GM12878 (cell line): ENCODE measurements at regions of chr2 and their contacts with region 1.

Region 1: DNA sequence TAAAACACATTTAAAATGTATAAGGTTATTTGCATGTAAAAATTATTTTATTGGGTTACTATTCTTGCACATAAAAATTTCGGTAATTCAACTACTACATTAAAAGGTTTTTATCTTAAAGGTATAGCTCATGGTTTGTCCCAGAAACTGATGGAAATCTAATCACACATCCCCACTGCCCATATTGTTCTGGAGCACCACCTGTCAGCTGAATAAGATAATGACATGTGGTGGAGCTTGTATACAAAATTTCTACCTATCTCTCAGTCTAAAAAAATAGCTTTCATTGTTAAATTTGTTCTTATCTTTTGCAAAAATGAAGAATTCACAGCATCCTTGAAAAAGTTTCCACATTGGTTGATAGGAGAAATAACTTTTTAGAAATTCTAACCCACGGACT is 18.3 kb downstream of the ERBB4 start:
- DNase-seq: no peak
- ATAC-seq: no peak
- H3K4me3 ChIP-seq: no peak overlapping the region
- H3K27ac ChIP-seq: no peak overlapping the region
- H3K4me1 ChIP-seq: no peaks in the 10 kb centered on the region
- H3K27me3 ChIP-seq: no peaks in the 10 kb centered on the region
- CTCF ChIP-seq: peak; percentile 18 to 54 (median 21); a peak in 2 of 6 replicates
- EP300 ChIP-seq: no peak
- POLR2A ChIP-seq: no peak
- RAD21 ChIP-seq: peak; percentile 59

Region 2: GRCh38 chr2:212147921-212148513 is 372.3 kb before region 1 on chr2:
- CTCF ChIA-PET with region 1: no interaction called
- POLR2A ChIA-PET with region 1: no interaction called
- RAD21 ChIA-PET with region 1: no interaction called
- SMC1A ChIA-PET with region 1: no interaction called
- in situ Hi-C with region 1: no loop called
- intact Hi-C with region 1: loop called (anchors 2 kb)
- DNase-seq: no peak
- ATAC-seq: no peak
- H3K4me3 ChIP-seq: no peak overlapping the region
- H3K27ac ChIP-seq: no peak overlapping the region
- H3K4me1 ChIP-seq: no peaks in the 10 kb centered on the region
- H3K27me3 ChIP-seq: no peaks in the 10 kb centered on the region; a peak in 1 of 4 replicates
- CTCF ChIP-seq: peak in 1 of 3 experiments; percentile 25; a peak in 2 of 6 replicates
- EP300 ChIP-seq: no peak
- POLR2A ChIP-seq: no peak
- RAD21 ChIP-seq: no peak

Region 3: GRCh38 chr2:212193056-212193455 is 327.3 kb before region 1 on chr2:
- CTCF ChIA-PET with region 1: no interaction called
- POLR2A ChIA-PET with region 1: no interaction called
- RAD21 ChIA-PET with region 1: no interaction called
- SMC1A ChIA-PET with region 1: no interaction called
- in situ Hi-C with region 1: no loop called
- intact Hi-C with region 1: no loop called
- DNase-seq: no peak
- ATAC-seq: no peak
- H3K4me3 ChIP-seq: no peak overlapping the region
- H3K27ac ChIP-seq: no peak overlapping the region
- H3K4me1 ChIP-seq: no peaks in the 10 kb centered on the region
- H3K27me3 ChIP-seq: no peaks in the 10 kb centered on the region
- CTCF ChIP-seq: no peak
- EP300 ChIP-seq: no peak
- POLR2A ChIP-seq: no peak
- RAD21 ChIP-seq: no peak

Region 4: GRCh38 chr2:212402315-212402714 is 118.0 kb before region 1 on chr2:
- CTCF ChIA-PET with region 1: no interaction called
- POLR2A ChIA-PET with region 1: no interaction called
- RAD21 ChIA-PET with region 1: no interaction called
- SMC1A ChIA-PET with region 1: no interaction called
- in situ Hi-C with region 1: no loop called
- intact Hi-C with region 1: loop called (anchors 10 kb)
- DNase-seq: no peak
- ATAC-seq: no peak
- H3K4me3 ChIP-seq: no peak overlapping the region
- H3K27ac ChIP-seq: no peak overlapping the region
- H3K4me1 ChIP-seq: no peaks in the 10 kb centered on the region
- H3K27me3 ChIP-seq: no peaks in the 10 kb centered on the region
- CTCF ChIP-seq: no peak
- EP300 ChIP-seq: no peak
- POLR2A ChIP-seq: no peak
- RAD21 ChIP-seq: no peak